AG04450 (cell line): ENCODE measurements at regions of chr2 and their contacts with region 1.

Region 1: GRCh38 chr2:23824777-23825212 is 102.1 kb downstream of the ATAD2B start:
- DNase-seq: no peak
- H3K4me3 ChIP-seq: no peak overlapping the region
- H3K27ac ChIP-seq: no peak overlapping the region
- H3K27me3 ChIP-seq: no peaks in the 10 kb centered on the region
- CTCF ChIP-seq: peak; percentile 76

Region 2: GRCh38 chr2:23554054-23554697 is 270.6 kb before region 1 on chr2:
- CTCF ChIA-PET with region 1: no interaction called
- POLR2A ChIA-PET with region 1: no interaction called
- DNase-seq: no peak
- H3K4me3 ChIP-seq: no peak overlapping the region
- H3K27ac ChIP-seq: peak overlapping the region; percentile 21
- H3K27me3 ChIP-seq: no peaks in the 10 kb centered on the region
- CTCF ChIP-seq: no peak

Region 3: DNA sequence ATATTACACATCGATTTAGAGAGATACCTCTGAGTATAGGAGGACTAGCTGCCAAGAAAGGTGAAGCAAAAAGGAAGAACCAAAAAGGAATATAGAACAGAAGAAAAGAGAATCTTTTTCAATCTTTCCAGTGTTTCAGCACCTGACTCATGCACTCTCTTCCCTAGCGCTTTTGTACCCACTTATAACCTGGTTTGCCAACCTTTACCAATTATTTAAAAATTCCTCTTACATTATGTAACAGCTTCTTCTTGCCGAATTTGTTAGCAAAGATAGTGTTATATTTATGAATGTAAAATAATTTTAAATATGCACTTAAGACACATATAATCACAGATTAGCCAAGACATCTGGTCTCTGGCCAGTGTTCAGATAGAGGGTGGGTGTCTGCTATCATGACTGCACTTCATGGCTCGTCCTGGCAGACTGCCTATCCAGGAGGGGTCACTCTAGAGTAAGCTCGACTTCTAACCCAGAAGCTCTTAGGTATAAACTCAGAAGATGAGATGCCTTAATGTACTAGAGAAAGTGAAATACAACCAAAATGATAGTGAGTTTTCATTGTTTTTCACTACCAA is 20.7 kb before region 1 on chr2:
- CTCF ChIA-PET with region 1: interaction called, 27 read pairs
- POLR2A ChIA-PET with region 1: no interaction called
- DNase-seq: peak; percentile 4
- H3K4me3 ChIP-seq: no peak overlapping the region
- H3K27ac ChIP-seq: no peak overlapping the region
- H3K27me3 ChIP-seq: no peaks in the 10 kb centered on the region
- CTCF ChIP-seq: peak; percentile 35; the same call in 1 of the 2 replicates

Region 4: DNA sequence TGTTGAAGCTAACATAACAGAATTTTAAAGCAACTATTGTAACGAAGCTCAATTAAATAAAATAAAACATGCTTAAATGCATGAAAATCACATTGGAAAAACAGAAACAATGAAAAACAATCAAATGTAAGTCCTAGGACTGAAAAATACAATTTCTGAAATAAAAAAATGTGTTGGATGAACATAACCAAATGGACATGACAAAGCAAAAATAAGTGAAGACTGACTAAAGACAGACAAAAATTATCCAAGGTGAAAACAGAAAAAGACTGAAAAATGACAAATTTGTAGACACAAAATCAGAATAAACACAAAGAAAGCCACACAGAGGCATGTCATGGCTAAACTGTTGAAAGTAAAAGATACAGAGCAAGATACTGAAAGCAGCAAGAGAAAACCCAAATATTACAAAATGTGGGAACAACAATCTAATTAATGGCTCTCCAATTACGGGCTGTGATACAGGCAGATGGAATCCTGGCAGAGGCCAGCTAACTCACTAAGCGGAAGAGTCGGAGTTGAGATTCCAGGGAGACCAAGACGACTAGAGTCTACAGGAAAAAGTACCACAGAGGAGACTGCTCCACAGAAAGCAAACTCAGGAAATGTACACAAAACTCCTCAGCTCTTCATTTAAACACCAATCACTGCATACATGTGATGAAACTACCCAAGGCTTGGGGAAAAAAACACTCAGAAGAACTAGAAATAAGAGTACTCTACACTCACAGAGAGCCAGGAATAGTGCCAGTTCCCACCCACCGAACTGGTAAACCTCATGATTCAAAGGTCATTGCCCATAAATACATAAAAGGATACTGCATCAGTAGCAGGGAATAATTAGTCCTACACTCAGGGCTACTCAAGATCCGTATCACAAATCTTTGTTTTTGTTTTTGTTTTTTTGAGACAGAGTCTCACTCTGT is 18.5 kb after region 1 on chr2:
- CTCF ChIA-PET with region 1: interaction called, 13 read pairs
- POLR2A ChIA-PET with region 1: no interaction called
- DNase-seq: no peak
- H3K4me3 ChIP-seq: no peak overlapping the region
- H3K27ac ChIP-seq: no peak overlapping the region
- H3K27me3 ChIP-seq: no peaks in the 10 kb centered on the region
- CTCF ChIP-seq: no peak

Region 5: GRCh38 chr2:24058564-24059271 is 233.9 kb after region 1 on chr2:
- CTCF ChIA-PET with region 1: interaction called, 26 read pairs
- POLR2A ChIA-PET with region 1: no interaction called
- DNase-seq: no peak
- H3K4me3 ChIP-seq: no peak overlapping the region
- H3K27ac ChIP-seq: no peak overlapping the region
- H3K27me3 ChIP-seq: no peaks in the 10 kb centered on the region
- CTCF ChIP-seq: no peak

Region 6: DNA sequence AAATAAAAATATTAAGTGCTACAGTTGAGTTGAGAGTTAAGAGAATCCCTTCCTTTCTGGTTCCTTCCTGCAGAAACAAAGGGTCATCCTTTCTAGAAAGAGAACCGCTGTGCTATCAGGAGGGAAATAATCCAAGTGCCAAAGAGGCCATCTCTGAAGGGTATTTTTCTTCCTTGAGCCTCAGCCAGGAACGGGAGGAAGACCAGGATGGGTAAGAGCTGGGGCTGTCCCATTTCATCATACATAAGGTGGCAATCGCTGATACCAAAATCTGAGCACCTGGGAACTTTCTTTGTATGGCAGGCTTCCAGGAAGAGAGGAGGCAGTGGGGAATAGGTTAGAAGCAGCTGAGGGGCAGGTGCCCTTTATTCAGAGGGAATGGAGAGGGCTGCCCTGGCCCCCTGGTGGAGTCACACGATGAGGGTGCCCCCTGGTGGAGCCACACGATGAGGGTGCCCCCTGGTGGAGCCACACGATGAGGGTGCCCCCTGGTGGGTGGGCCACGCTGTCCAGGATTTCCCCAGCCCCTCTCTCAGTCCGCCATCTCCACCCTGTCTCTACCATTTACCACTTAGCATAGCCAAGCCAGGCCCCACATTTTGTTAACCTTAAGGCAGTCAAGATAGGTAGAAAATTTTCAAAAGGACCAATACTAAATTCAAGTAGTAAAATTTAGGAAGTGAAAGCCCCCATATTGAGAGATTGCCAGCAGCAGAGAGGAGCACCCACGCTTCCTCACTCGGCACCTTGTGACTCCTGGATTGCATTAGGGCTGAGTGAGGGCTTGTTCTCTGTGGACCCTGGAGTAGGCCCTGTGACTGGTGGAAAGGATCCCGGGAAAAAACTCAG is 339.6 kb after region 1 on chr2:
- CTCF ChIA-PET with region 1: interaction called, 13 read pairs
- POLR2A ChIA-PET with region 1: no interaction called
- DNase-seq: no peak
- H3K4me3 ChIP-seq: no peak overlapping the region
- H3K27ac ChIP-seq: no peak overlapping the region
- H3K27me3 ChIP-seq: no peaks in the 10 kb centered on the region
- CTCF ChIP-seq: peak; percentile 56